HEK293 (cell line): ENCODE measurements at regions of chr1 and their contacts with region 1.

Region 1: DNA sequence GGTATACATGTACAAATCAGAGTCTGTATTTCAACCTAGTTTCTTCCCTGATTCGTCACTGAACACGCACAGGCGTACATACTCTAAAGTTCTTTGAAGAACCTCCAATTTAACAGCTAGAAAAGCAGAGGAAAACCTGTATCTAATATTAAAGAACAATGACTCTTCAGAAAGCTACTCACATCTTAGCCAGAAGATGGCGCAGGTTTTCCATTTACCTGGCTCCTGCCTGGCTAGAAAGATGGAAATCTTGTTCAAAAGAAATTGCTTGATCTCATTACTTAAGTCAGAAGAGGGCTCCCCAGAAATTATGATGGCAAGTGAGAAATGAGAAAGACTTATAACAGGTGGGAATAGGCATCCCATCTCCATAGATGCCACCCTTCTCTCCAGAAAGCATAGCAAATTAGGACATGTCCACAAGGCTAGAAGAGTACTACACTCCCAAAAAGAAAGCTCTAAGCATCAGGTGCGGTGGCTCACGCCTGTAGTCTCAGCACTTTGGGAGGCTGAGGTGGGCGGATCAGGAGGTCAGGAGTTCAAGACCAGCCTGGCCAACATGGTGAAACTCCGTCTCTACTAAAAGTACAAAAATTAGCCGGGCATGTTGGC is 19.0 kb upstream of the L1TD1 start:
- H3K4me3 ChIP-seq: no peak overlapping the region
- H3K27ac ChIP-seq: no peak overlapping the region
- H3K4me1 ChIP-seq: no peaks in the 10 kb centered on the region
- CTCF ChIP-seq: peak; percentile 57; the same call in 1 of the 2 replicates

Region 2: GRCh38 chr1:62285984-62286785 is 110.5 kb after region 1 on chr1:
- CTCF ChIA-PET with region 1: interaction called, 10 read pairs
- POLR2A ChIA-PET with region 1: no interaction called
- H3K4me3 ChIP-seq: no peak overlapping the region
- H3K27ac ChIP-seq: no peak overlapping the region
- H3K4me1 ChIP-seq: peaks cover 17% of the 10 kb centered on the region
- CTCF ChIP-seq: no peak

Region 3: GRCh38 chr1:62391369-62391971 is 215.8 kb after region 1 on chr1:
- CTCF ChIA-PET with region 1: interaction called, 15 read pairs
- POLR2A ChIA-PET with region 1: no interaction called
- H3K4me3 ChIP-seq: no peak overlapping the region
- H3K27ac ChIP-seq: no peak overlapping the region
- H3K4me1 ChIP-seq: peaks cover 5% of the 10 kb centered on the region
- CTCF ChIP-seq: peak; percentile 66

Region 4: GRCh38 chr1:62417361-62417999 is 241.8 kb after region 1 on chr1:
- CTCF ChIA-PET with region 1: interaction called, 11 read pairs
- POLR2A ChIA-PET with region 1: no interaction called
- H3K4me3 ChIP-seq: no peak overlapping the region
- H3K27ac ChIP-seq: no peak overlapping the region
- H3K4me1 ChIP-seq: no peaks in the 10 kb centered on the region
- CTCF ChIP-seq: no peak

Region 5: GRCh38 chr1:62676611-62677356 is 501.1 kb after region 1 on chr1:
- CTCF ChIA-PET with region 1: no interaction called
- POLR2A ChIA-PET with region 1: no interaction called
- H3K4me3 ChIP-seq: no peak overlapping the region
- H3K27ac ChIP-seq: no peak overlapping the region
- H3K4me1 ChIP-seq: peaks cover 12% of the 10 kb centered on the region
- CTCF ChIP-seq: no peak